ENCODE measurements at regions of chr1 and their contacts with region 1.

Region 1: DNA sequence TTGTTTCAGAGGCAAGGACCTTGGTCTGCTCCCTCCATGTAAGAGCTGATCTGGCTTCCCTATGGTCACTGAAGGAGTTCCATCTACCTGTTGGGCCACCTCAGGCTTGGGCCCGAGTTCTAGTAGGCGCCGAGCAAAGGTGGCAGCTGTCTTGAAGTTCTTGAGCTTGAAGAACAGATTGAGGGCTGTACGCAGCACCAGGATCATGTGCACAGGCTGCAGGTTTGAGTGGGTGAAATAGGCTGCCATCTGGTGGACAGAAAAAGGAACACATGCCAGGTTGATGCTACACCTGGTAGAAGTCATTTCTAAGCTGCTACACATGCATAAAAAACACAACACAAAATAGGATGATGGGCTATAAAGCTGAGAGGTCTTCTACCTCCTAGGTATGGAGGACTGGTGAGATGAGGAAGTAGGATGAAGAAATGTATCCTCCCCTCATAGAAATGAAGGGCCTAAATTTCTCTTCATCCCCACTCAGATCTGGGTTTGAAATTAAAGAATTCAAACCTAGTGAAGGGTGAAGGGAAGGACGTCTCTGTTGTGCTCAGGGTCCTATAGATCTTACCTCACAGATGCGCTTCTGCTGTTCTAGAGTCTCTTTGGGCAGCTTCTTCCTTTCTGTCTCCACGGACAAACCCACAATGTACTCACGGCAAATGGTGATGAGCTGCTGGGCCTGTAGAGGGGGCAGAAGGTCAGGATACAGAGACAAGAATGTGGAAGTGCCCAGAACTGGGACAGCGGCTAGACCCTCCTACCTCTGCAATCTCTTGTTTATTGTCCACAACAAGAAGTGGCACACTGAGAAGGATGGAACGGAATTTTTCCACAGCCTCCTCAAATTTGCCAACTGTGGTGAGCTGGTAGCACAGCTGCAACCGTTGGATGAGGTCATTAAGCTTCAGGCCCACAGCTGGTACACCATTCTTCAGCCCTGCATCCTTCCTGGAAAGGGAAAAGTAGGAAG is 6.6 kb upstream of the PEX19 start:
- DNase-seq: peak; percentile 79

Region 2: DNA sequence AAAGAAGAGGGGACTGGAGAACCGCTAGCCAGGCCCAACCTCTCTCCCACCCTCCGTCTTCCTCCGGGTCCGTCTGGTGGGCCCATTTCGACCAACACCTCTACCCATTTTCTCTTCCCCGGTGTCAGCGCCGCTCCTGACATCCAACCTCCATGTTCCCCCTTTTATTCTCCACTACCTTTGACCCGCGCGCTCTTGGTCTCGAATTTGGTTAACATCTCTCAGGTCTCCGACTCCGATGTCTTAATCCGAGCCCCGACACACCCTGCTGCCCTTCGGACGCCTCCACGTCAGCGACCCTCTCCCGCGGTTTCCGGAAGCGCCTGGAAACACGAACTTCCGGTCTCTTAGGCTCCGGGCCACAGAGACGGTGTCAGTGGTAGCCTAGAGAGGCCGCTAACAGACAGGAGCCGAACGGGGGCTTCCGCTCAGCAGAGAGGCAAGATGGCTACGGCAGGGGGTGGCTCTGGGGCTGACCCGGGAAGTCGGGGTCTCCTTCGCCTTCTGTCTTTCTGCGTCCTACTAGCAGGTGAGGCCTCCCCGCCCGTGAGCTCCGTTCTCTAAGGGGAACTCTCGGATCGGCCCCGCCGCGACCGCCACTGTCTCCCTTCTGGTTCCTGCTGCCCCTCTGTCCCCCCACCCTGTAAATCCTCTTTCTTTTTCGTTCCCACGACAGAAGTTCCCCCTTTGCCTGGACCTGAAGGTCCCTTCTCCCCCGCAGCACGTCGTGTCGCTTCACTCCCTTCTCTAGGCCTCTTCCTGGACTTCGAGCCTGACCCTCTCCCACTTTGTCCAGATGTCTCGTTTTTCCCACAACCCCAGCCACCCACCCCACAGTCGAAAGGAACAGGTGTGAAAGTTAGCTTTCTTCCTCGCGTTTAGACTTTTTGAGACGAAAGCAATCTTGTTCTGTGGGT is 51.7 kb after region 1 on chr1 and contains the starts of genes COPA and NCSTN:
- intact Hi-C with region 1: loop called (anchors 5 kb)
- DNase-seq: peak; percentile 95
- total RNA-seq, gene COPA: 118 TPM
- total RNA-seq, gene NCSTN: 53.7 TPM

Measured in cardiac septum (tissue), 1 donor.